MCF 10A (cell line): ENCODE measurements at regions of chr5 and their contacts with region 1.

Region 1: GRCh38 chr5:38551030-38552017 is 5.1 kb downstream of the LIFR start:
- DNase-seq: peak; percentile 72
- H3K4me3 Mint-ChIP-seq: no peak overlapping the region
- H3K27ac Mint-ChIP-seq: no peak overlapping the region
- H3K4me1 Mint-ChIP-seq: peaks cover 5% of the 10 kb centered on the region
- H3K27me3 Mint-ChIP-seq: no peaks in the 10 kb centered on the region
- CTCF ChIP-seq: peak; percentile 57

Region 2: DNA sequence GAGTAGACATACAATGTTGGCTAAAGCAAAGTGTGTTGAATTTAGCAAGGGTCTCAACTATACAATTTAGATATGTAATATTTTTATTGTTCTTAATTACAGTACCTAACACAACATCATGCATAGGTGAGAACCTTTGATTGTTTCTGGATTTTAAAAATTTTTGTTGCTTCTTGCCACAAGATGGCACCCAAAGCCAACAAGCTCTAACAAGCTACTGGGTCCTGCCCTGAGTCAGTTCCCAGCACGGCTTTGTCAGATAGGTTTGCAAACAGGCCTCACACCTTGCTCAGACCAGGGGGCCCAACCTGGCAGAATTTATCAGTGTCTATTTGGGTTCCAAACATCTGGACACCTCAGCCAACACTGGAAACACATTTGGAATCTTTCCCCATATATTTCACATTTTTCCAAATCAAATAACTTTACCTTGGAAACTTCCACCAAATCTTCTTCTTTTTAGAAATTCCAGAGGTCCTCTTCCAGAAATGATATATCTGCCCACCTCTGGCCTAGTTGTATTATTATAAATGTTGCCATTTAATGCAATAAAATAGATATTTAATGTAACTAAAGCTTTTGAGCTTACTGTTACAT is 342.4 kb before region 1 on chr5:
- CTCF ChIA-PET with region 1: no interaction called
- POLR2A ChIA-PET with region 1: no interaction called
- intact Hi-C with region 1: loop called (anchors 5 kb)
- DNase-seq: peak; percentile 66
- H3K4me3 Mint-ChIP-seq: no peak overlapping the region
- H3K27ac Mint-ChIP-seq: no peak overlapping the region
- H3K4me1 Mint-ChIP-seq: peaks cover 11% of the 10 kb centered on the region
- H3K27me3 Mint-ChIP-seq: peaks cover 44% of the 10 kb centered on the region
- CTCF ChIP-seq: peak; percentile 77

Region 3: GRCh38 chr5:38540314-38540713 is 11.0 kb before region 1 on chr5:
- CTCF ChIA-PET with region 1: interaction called, 19 read pairs
- POLR2A ChIA-PET with region 1: interaction called, 10 read pairs
- intact Hi-C with region 1: no loop called
- DNase-seq: no peak
- H3K4me3 Mint-ChIP-seq: no peak overlapping the region
- H3K27ac Mint-ChIP-seq: no peak overlapping the region
- H3K4me1 Mint-ChIP-seq: peaks cover 11% of the 10 kb centered on the region
- H3K27me3 Mint-ChIP-seq: no peaks in the 10 kb centered on the region
- CTCF ChIP-seq: no peak